ENCODE measurements at regions of chr12 and their contacts with region 1.

Region 1: GRCh38 chr12:62409068-62409467 is 57.6 kb upstream of the MON2 start:
- DNase-seq: no peak
- ATAC-seq: no peak
- H3K4me3 ChIP-seq: no peak overlapping the region
- H3K27ac ChIP-seq: no peak overlapping the region
- H3K4me1 ChIP-seq: no peaks in the 10 kb centered on the region
- H3K27me3 ChIP-seq: no peaks in the 10 kb centered on the region
- CTCF ChIP-seq: no peak
- POLR2A ChIP-seq: no peak
- RAD21 ChIP-seq: no peak

Region 2: GRCh38 chr12:61574339-61574738 is 834.7 kb before region 1 on chr12:
- CTCF ChIA-PET with region 1: no interaction called
- POLR2A ChIA-PET with region 1: no interaction called
- dilution Hi-C with region 1: no loop called
- in situ Hi-C with region 1: no loop called
- intact Hi-C with region 1: no loop called
- DNase-seq: no peak
- ATAC-seq: no peak
- H3K4me3 ChIP-seq: no peak overlapping the region
- H3K27ac ChIP-seq: no peak overlapping the region
- H3K4me1 ChIP-seq: no peaks in the 10 kb centered on the region
- H3K27me3 ChIP-seq: no peaks in the 10 kb centered on the region
- CTCF ChIP-seq: no peak
- POLR2A ChIP-seq: no peak
- RAD21 ChIP-seq: no peak

Region 3: DNA sequence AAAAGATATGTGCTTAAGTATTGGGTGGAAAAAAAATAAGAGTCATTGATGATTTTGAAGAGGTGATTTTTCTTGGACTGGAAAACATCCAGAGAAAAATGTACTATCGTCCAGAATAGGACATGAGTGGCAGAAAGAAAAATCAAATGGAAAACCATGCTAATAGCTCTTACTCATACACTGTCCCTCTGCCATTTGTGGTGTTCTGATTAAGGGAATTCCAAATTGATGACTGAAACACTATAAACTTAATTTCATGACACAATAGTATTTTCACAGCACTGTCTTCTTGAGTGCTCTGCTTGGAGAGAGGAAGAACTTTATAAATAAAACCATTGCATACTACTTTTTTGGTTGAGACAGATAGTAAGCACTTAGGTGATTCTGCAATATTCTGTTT is 76.5 kb before region 1 on chr12:
- CTCF ChIA-PET with region 1: interaction called, 12 read pairs
- POLR2A ChIA-PET with region 1: no interaction called
- dilution Hi-C with region 1: no loop called
- in situ Hi-C with region 1: no loop called
- intact Hi-C with region 1: no loop called
- DNase-seq: peak; percentile 79
- ATAC-seq: peak; percentile 62
- H3K4me3 ChIP-seq: no peak overlapping the region
- H3K27ac ChIP-seq: no peak overlapping the region
- H3K4me1 ChIP-seq: peaks cover 2% of the 10 kb centered on the region; the same call in 1 of the 2 replicates
- H3K27me3 ChIP-seq: no peaks in the 10 kb centered on the region
- CTCF ChIP-seq: no peak
- POLR2A ChIP-seq: no peak
- RAD21 ChIP-seq: no peak

Region 4: DNA sequence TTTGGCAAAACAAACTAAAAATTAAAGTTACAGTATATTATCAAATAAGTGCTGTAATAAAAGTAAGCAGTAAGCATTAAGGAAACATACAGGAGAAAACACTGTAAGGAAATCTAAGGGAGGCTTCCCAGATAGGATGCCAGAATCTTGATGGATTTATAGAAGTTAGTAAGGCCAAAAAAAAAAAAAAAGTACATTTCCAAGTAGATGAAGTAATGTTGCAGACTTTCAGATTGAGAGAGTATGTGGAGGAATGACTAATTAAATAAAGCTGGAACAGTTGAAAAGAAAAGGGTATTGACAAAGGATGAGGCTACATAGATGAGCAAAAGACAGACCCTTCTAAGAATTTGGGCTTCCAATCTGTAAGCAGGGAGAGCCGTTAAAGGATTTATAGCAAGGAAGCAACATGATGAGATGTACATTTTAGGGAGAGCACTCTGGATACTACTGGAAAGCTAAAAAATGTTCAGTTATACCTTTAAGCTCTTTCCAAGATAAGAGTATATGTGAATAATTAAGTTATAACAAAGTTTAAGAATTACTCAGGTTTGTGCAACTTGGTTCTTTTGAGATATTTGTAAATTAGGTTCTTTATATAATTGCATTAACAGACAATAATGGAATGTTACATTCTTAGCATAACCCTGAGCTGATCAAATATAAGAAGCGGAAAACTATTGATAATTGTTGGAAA is 29.9 kb before region 1 on chr12:
- CTCF ChIA-PET with region 1: no interaction called
- POLR2A ChIA-PET with region 1: no interaction called
- dilution Hi-C with region 1: no loop called
- in situ Hi-C with region 1: no loop called
- intact Hi-C with region 1: no loop called
- DNase-seq: peak; percentile 25
- ATAC-seq: no peak; the same call in 1 of the 2 replicates
- H3K4me3 ChIP-seq: no peak overlapping the region
- H3K27ac ChIP-seq: no peak overlapping the region
- H3K4me1 ChIP-seq: no peaks in the 10 kb centered on the region
- H3K27me3 ChIP-seq: no peaks in the 10 kb centered on the region
- CTCF ChIP-seq: no peak
- POLR2A ChIP-seq: no peak
- RAD21 ChIP-seq: no peak